ENCODE measurements at regions of chr12 and their contacts with region 1.

Region 1: DNA sequence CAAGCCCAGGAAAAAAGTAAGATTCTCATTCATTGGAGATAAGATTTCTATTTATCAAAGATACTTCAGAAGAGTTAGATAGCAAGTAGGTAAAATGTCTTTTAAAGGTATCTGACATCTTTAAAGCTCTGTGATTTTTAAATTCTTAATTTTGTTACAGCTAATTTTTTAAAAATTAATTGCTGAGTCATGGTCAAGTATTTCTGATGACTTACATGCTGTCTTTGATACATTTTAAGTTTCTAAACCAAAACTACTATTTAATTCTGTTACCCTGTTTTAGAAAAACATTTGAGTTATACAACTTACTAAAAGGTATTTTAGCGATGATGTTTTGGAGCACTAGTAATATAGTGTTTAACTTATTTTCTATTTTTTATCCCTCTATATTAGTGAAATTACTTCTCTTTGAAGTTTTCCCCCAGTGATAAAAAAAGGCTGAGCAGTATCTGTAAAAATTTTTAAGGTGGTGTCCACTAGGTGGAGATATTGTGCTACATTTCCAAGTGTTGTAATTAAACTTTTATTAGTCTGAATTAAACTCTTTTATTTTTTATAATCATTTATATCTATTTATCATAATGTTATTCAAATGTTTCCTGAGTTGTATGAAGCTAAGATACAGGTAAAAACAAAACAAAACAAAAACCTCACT is 11.5 kb downstream of the ALG10 start:
- DNase-seq: peak in 1 of 2 experiments; percentile 56
- ATAC-seq: no peak
- H3K4me3 ChIP-seq: no peak overlapping the region
- H3K27ac ChIP-seq: no peak overlapping the region
- H3K4me1 ChIP-seq: no peaks in the 10 kb centered on the region
- CTCF ChIP-seq: peak; percentile 56
- EP300 ChIP-seq: no peak
- POLR2A ChIP-seq: no peak
- RAD21 ChIP-seq: peak; percentile 54; a peak in 4 of 5 replicates

Region 2: GRCh38 chr12:34022079-34022830 is 11.5 kb before region 1 on chr12 and contains the start of gene ALG10:
- CTCF ChIA-PET with region 1: interaction called, 11 read pairs
- POLR2A ChIA-PET with region 1: interaction called, 4 read pairs
- DNase-seq: peak; percentile 63 to 98
- ATAC-seq: peak; percentile 100
- H3K4me3 ChIP-seq: peak within 1 kb of the TSS; percentile 79
- H3K27ac ChIP-seq: peak within 1 kb of the TSS; percentile 79 to 92
- H3K4me1 ChIP-seq: peaks cover 8% of the 10 kb centered on the region; the same call in 2 of the 3 replicates
- CTCF ChIP-seq: peak; percentile 85
- EP300 ChIP-seq: no peak
- POLR2A ChIP-seq: peak; percentile 53
- RAD21 ChIP-seq: peak; percentile 84 to 89
- polyA plus RNA-seq, gene ALG10: 13.9 and 16.4 TPM in 2 replicates

Region 3: DNA sequence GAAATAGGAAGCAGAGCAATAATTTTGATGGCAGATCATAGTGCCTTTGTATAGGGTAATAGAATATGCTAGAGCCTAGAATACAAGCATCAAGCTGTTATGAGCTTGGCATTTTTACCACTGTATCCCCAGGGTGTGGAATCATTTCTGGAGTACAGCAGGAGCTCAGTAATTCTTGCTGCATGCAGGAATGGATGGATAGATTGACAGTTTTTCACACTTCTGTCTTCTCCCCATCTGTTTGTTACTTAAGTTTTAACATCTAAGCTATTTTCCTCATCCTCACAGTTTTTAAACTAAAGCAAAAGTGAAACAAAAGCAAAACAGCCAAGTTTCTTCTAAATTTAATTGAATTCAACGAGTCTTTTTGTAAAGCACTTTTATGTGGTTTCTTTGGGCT is 21.2 kb after region 1 on chr12:
- CTCF ChIA-PET with region 1: no interaction called
- POLR2A ChIA-PET with region 1: no interaction called
- DNase-seq: no peak
- ATAC-seq: no peak
- H3K4me3 ChIP-seq: no peak overlapping the region
- H3K27ac ChIP-seq: no peak overlapping the region
- H3K4me1 ChIP-seq: no peaks in the 10 kb centered on the region
- CTCF ChIP-seq: no peak
- EP300 ChIP-seq: no peak
- POLR2A ChIP-seq: no peak
- RAD21 ChIP-seq: no peak

Region 4: GRCh38 chr12:34142430-34142829 is 108.7 kb after region 1 on chr12:
- CTCF ChIA-PET with region 1: no interaction called
- POLR2A ChIA-PET with region 1: no interaction called
- DNase-seq: no peak
- ATAC-seq: no peak
- H3K4me3 ChIP-seq: no peak overlapping the region
- H3K27ac ChIP-seq: no peak overlapping the region
- H3K4me1 ChIP-seq: no peaks in the 10 kb centered on the region
- CTCF ChIP-seq: no peak
- EP300 ChIP-seq: no peak
- POLR2A ChIP-seq: no peak
- RAD21 ChIP-seq: no peak

Measured in A549 (cell line).